ENCODE measurements at regions of chr2 and their contacts with region 1.

Region 1: GRCh38 chr2:171553858-171554257 is 31.6 kb downstream of the CYBRD1 start:
- DNase-seq: no peak
- H3K4me3 ChIP-seq: no peak overlapping the region
- H3K27ac ChIP-seq: no peak overlapping the region
- H3K4me1 ChIP-seq: peaks cover 7% of the 10 kb centered on the region
- H3K27me3 ChIP-seq: no peaks in the 10 kb centered on the region
- CTCF ChIP-seq: no peak

Region 2: GRCh38 chr2:171522052-171522787 is 31.6 kb before region 1 on chr2 and contains the start of gene CYBRD1:
- CTCF ChIA-PET with region 1: no interaction called
- dilution Hi-C with region 1: no loop called
- in situ Hi-C with region 1: no loop called
- intact Hi-C with region 1: loop called (anchors 1 kb)
- DNase-seq: peak; percentile 44
- H3K4me3 ChIP-seq: peak within 1 kb of the TSS; percentile 74 to 83 (median 77)
- H3K27ac ChIP-seq: no peak within 1 kb of the TSS
- H3K4me1 ChIP-seq: peaks cover 24% of the 10 kb centered on the region
- H3K27me3 ChIP-seq: no peaks in the 10 kb centered on the region
- CTCF ChIP-seq: no peak
- total RNA-seq, gene CYBRD1: 25.6 to 62.8 TPM

Region 3: DNA sequence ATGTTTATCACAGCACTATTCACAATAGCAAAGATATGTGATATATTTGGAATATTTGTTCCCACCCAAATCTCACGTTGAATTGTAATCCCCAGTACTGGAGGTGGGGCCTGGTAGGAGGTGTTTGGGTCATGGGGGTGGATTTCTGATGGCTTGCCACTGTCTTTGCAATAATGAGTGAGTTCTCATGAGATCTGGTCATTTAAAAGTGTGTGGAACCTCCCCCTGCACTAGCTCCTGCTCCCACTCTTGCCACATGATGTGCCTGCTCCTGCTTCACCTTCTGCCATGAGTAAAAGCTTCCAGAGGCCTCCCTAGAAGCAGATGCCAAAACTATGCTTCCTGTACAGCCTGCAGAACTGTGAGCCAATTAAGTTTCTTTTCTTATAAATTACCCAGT is 61.2 kb after region 1 on chr2:
- CTCF ChIA-PET with region 1: no interaction called
- dilution Hi-C with region 1: no loop called
- in situ Hi-C with region 1: no loop called
- intact Hi-C with region 1: no loop called
- DNase-seq: no peak
- H3K4me3 ChIP-seq: no peak overlapping the region
- H3K27ac ChIP-seq: no peak overlapping the region
- H3K4me1 ChIP-seq: no peaks in the 10 kb centered on the region
- H3K27me3 ChIP-seq: no peaks in the 10 kb centered on the region
- CTCF ChIP-seq: no peak

Measured in mammary epithelial cell (primary cell).